Head of caudate nucleus (tissue), 42 donors: ENCODE measurements at regions of chr21 and their contacts with region 1.

Region 1: GRCh38 chr21:43938751-43939442 is 73.2 kb upstream of the TRAPPC10 start:
- DNase-seq: peak; percentile 66 to 94 (median 85)

Region 2: GRCh38 chr21:43803558-43804300 is 135.2 kb before region 1 on chr21:
- intact Hi-C with region 1: loop called (anchors 5 kb)
- DNase-seq: no peak

Region 3: DNA sequence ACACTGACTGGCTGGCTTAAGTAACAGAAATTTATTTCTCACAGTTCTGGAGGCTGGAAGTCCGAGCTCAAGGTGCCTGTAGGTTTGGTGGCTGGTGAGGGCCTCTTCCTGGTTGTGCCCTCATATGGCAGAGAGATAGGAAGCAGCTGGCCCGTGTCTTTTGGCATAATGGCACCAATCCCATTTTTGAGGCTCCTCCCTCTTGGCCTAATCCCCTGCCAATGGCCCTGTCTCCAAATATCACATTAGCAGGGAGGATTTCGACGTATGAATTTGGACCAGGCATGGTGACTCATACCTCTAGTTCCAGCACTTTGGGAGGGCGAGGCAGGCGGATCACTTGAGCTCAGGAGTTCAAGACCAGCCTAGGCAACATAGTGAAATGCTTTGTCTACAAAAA is 36.5 kb before region 1 on chr21:
- intact Hi-C with region 1: no loop called
- DNase-seq: peak in 3 of 42 donors; percentile 6 to 12 (median 10)